Naive thymus-derived CD4-positive, alpha-beta T cell (primary cell): ENCODE measurements at regions of chr17 and their contacts with region 1.

Region 1: GRCh38 chr17:28916302-28916934 is 13.5 kb upstream of the DHRS13 start:
- DNase-seq: peak in 6 of 9 donors; percentile 38 to 50 (median 42)
- ATAC-seq: peak; percentile 90
- H3K4me3 ChIP-seq: no peak overlapping the region
- H3K4me3 Mint-ChIP-seq: no peak overlapping the region
- H3K27ac ChIP-seq: peak overlapping the region; percentile 46
- H3K27ac Mint-ChIP-seq: peak overlapping the region in 7 of 9 donors; percentile 46 to 93 (median 65)
- H3K4me1 ChIP-seq: no peaks in the 10 kb centered on the region
- H3K4me1 Mint-ChIP-seq: peaks cover 0 to 9% (median 6%) of the 10 kb centered on the region in 7 donors
- H3K27me3 ChIP-seq: no peaks in the 10 kb centered on the region
- H3K27me3 Mint-ChIP-seq: no peaks in the 10 kb centered on the region

Region 2: GRCh38 chr17:28057731-28058279 is 858.6 kb before region 1 on chr17:
- CTCF ChIA-PET with region 1: no interaction called
- POLR2A ChIA-PET with region 1: no interaction called
- intact Hi-C with region 1: no loop called
- DNase-seq: no peak
- ATAC-seq: peak; percentile 69
- H3K4me3 ChIP-seq: no peak overlapping the region
- H3K4me3 Mint-ChIP-seq: no peak overlapping the region
- H3K27ac ChIP-seq: no peak overlapping the region
- H3K27ac Mint-ChIP-seq: peak overlapping the region in 1 of 9 donors; percentile 60
- H3K4me1 ChIP-seq: peaks cover 0 to 5% of the 10 kb centered on the region in 2 donors
- H3K4me1 Mint-ChIP-seq: peaks cover 16 to 61% (median 44%) of the 10 kb centered on the region in 7 donors
- H3K27me3 ChIP-seq: no peaks in the 10 kb centered on the region
- H3K27me3 Mint-ChIP-seq: no peaks in the 10 kb centered on the region

Region 3: GRCh38 chr17:28750178-28751047 is 166.0 kb before region 1 on chr17:
- CTCF ChIA-PET with region 1: interaction called, 13 read pairs
- POLR2A ChIA-PET with region 1: no interaction called
- intact Hi-C with region 1: no loop called
- DNase-seq: peak; percentile 73 to 87 (median 82)
- ATAC-seq: peak; percentile 96
- H3K4me3 ChIP-seq: no peak overlapping the region
- H3K4me3 Mint-ChIP-seq: peak overlapping the region in 1 of 10 donors; percentile 51
- H3K27ac ChIP-seq: peak overlapping the region; percentile 2
- H3K27ac Mint-ChIP-seq: peak overlapping the region in 4 of 9 donors; percentile 11 to 52 (median 38)
- H3K4me1 ChIP-seq: peaks cover 6 to 14% of the 10 kb centered on the region in 2 donors
- H3K4me1 Mint-ChIP-seq: peaks cover 0 to 29% (median 15%) of the 10 kb centered on the region in 7 donors
- H3K27me3 ChIP-seq: no peaks in the 10 kb centered on the region
- H3K27me3 Mint-ChIP-seq: no peaks in the 10 kb centered on the region

Region 4: DNA sequence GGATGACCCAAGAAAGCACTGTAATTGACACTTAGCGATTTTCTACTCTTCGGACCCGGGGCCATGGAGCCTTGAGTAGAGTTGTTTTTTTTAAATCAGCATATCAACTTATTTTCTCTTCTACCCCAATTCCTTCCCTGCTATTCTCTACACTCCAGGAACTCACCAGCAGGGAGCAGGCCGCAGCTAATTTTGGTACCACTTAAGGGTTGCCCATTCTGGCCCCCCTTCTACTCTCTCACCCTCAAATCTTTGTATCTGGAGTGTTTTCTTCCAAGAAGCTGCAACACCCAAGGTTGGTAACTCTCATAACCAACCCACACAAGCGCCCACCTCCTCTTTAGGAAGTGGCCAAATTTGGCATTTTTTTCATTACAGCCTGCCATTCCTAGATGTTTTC is 67.1 kb before region 1 on chr17:
- CTCF ChIA-PET with region 1: interaction called, 4 read pairs
- POLR2A ChIA-PET with region 1: no interaction called
- intact Hi-C with region 1: loop called in 1 of 2 experiments (anchors 1 kb)
- DNase-seq: no peak
- ATAC-seq: peak; percentile 51
- H3K4me3 ChIP-seq: no peak overlapping the region
- H3K4me3 Mint-ChIP-seq: no peak overlapping the region
- H3K27ac ChIP-seq: no peak overlapping the region
- H3K27ac Mint-ChIP-seq: peak overlapping the region in 1 of 9 donors; percentile 48
- H3K4me1 ChIP-seq: peaks cover 0 to 3% of the 10 kb centered on the region in 2 donors
- H3K4me1 Mint-ChIP-seq: peaks cover 0 to 6% (median 0%) of the 10 kb centered on the region in 7 donors
- H3K27me3 ChIP-seq: no peaks in the 10 kb centered on the region
- H3K27me3 Mint-ChIP-seq: no peaks in the 10 kb centered on the region

Region 5: GRCh38 chr17:29069526-29070041 is 153.2 kb after region 1 on chr17:
- CTCF ChIA-PET with region 1: no interaction called
- POLR2A ChIA-PET with region 1: no interaction called
- intact Hi-C with region 1: no loop called
- DNase-seq: no peak
- ATAC-seq: no peak
- H3K4me3 ChIP-seq: no peak overlapping the region
- H3K4me3 Mint-ChIP-seq: no peak overlapping the region
- H3K27ac ChIP-seq: no peak overlapping the region
- H3K27ac Mint-ChIP-seq: no peak overlapping the region
- H3K4me1 ChIP-seq: no peaks in the 10 kb centered on the region
- H3K4me1 Mint-ChIP-seq: peaks cover 0 to 6% (median 0%) of the 10 kb centered on the region in 7 donors
- H3K27me3 ChIP-seq: no peaks in the 10 kb centered on the region
- H3K27me3 Mint-ChIP-seq: peaks cover 0 to 3% (median 0%) of the 10 kb centered on the region in 5 donors